CD4-positive, alpha-beta T cell (primary cell): ENCODE measurements at regions of chr19 and their contacts with region 1.

Region 1: DNA sequence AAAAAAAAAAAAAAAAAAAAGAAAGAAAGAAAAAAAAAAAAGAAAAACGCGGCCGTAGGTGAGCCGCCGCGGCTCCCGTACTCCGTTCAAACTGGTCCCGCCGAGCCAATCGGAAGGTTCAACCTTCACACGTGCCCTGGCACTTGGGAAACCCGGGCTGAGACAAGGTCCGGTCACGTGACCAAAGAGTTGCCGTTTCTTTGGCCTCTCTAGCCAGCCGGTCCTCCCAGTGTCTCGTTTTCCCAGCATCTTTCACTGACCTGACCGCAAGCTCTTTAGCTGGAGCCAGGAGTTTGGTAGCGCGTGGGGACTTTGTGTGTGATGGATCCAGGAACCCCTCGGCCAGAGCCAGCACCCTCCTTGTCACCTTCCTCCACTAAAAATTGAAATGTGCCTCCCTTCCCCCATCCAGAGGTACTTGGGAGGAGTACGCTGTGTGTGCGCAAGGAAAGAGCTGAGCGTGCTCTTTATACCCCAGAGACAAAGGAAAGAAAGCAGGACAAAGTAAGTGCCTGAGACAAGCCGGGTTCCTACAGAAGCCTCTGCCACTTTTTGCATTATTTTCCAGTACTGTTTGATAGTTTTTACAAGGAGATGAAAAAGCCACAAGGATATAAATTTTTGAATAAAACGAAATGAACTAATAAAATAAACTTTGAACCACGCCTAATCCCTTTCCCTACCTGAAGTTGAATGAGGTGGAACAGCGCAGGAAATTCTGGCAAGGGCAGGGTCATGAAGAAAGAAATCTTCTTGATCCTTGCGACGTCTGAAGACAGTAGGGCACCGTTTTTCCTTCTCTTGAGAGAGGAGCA is 959 bp downstream of the TNPO2 start:
- DNase-seq: peak; percentile 80 to 99 (median 90)
- ATAC-seq: peak; percentile 87
- H3K4me3 ChIP-seq: peak overlapping the region; percentile 69
- H3K4me3 Mint-ChIP-seq: peak overlapping the region; percentile 98
- H3K27ac ChIP-seq: peak overlapping the region; percentile 48 to 78
- H3K27ac Mint-ChIP-seq: peak overlapping the region; percentile 89
- H3K4me1 ChIP-seq: peaks cover 39% of the 10 kb centered on the region
- H3K4me1 Mint-ChIP-seq: peaks cover 47% of the 10 kb centered on the region
- H3K27me3 ChIP-seq: no peaks in the 10 kb centered on the region
- H3K27me3 Mint-ChIP-seq: no peaks in the 10 kb centered on the region
- CTCF ChIP-seq: no peak

Region 2: DNA sequence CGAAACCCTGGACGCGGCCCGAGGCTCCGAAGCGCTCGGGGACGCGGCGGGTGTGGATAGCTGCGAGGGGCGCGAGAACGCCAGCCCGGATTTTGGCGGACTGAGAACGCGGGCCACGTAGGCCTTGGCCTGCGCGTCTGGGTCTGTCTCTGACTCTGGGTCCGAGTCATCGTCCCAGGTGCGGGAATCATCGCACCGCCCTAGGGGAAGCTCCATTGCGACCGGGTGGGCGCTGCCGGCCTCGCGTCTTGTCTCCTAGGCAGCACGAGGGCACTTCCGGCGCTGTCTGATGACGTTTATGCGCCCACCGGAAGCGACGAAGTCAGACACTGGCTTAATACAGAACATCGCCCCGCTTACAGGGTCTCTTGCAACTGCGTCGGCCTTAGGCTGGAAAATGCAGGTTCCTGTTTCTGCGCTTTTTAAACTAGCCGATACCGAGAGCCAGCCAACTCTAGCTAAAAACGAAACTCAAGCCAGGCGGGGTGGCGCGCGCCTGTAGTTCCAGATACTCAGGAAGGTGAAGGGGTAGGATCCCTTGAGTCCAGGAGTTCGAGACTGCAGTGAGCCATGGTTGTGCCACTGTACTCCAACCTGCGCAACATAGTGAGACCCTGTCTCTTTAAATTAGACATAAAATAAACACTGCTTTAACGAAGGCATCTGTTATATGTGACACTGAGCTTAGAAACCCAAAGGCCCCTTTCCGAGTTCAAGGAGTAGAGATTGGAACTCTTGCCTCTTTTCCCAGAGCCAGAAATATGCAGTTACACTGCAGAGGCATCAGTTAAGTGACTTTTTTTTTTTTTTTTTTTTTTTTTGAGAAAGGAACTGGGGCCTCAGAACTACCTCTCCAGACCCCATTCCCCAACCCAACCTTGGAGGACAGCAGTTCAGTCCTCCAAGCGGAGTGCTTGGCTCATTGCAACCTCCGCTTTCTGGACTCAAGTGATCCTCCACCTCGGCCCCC is 26.1 kb before region 1 on chr19 and contains the start of gene FBXW9:
- CTCF ChIA-PET with region 1: interaction called, 3 read pairs
- POLR2A ChIA-PET with region 1: interaction called, 12 read pairs
- intact Hi-C with region 1: loop called in 1 of 2 experiments (anchors 1 kb)
- DNase-seq: peak; percentile 93 to 99 (median 98)
- ATAC-seq: peak; percentile 89
- H3K4me3 ChIP-seq: peak within 1 kb of the TSS; percentile 98
- H3K4me3 Mint-ChIP-seq: peak within 1 kb of the TSS; percentile 92
- H3K27ac ChIP-seq: peak within 1 kb of the TSS; percentile 78 to 90
- H3K27ac Mint-ChIP-seq: peak within 1 kb of the TSS; percentile 95
- H3K4me1 ChIP-seq: peaks cover 23% of the 10 kb centered on the region
- H3K4me1 Mint-ChIP-seq: peaks cover 11% of the 10 kb centered on the region
- H3K27me3 ChIP-seq: no peaks in the 10 kb centered on the region
- H3K27me3 Mint-ChIP-seq: no peaks in the 10 kb centered on the region
- CTCF ChIP-seq: no peak
- total RNA-seq, gene FBXW9: 2.2 to 2.4 TPM

Region 3: GRCh38 chr19:12736995-12737834 is 14.4 kb after region 1 on chr19 and contains the start of gene GET3:
- CTCF ChIA-PET with region 1: interaction called, 38 read pairs
- POLR2A ChIA-PET with region 1: interaction called, 79 read pairs
- intact Hi-C with region 1: loop called (anchors 1 kb)
- DNase-seq: peak; percentile 66 to 92 (median 74)
- ATAC-seq: peak; percentile 82
- H3K4me3 ChIP-seq: peak within 1 kb of the TSS; percentile 79
- H3K4me3 Mint-ChIP-seq: peak within 1 kb of the TSS; percentile 96
- H3K27ac ChIP-seq: peak within 1 kb of the TSS; percentile 76
- H3K27ac Mint-ChIP-seq: peak within 1 kb of the TSS; percentile 86
- H3K4me1 ChIP-seq: peaks cover 52% of the 10 kb centered on the region
- H3K4me1 Mint-ChIP-seq: peaks cover 38% of the 10 kb centered on the region
- H3K27me3 ChIP-seq: no peaks in the 10 kb centered on the region
- H3K27me3 Mint-ChIP-seq: no peaks in the 10 kb centered on the region
- CTCF ChIP-seq: no peak
- total RNA-seq, gene GET3: 13.9 to 14.5 TPM